ENCODE measurements at regions of chr6 and their contacts with region 1.

Region 1: GRCh38 chr6:161228921-161229591 is 44.8 kb downstream of the AGPAT4 start:
- H3K4me3 Mint-ChIP-seq: peak overlapping the region; percentile 39
- H3K27ac Mint-ChIP-seq: peak overlapping the region; percentile 91
- H3K4me1 Mint-ChIP-seq: peaks cover 59% of the 10 kb centered on the region
- H3K27me3 Mint-ChIP-seq: no peaks in the 10 kb centered on the region

Region 2: GRCh38 chr6:161101517-161101916 is 127.5 kb before region 1 on chr6:
- intact Hi-C with region 1: loop called (anchors 5 kb)
- H3K4me3 Mint-ChIP-seq: no peak overlapping the region
- H3K27ac Mint-ChIP-seq: no peak overlapping the region
- H3K4me1 Mint-ChIP-seq: peaks cover 21% of the 10 kb centered on the region
- H3K27me3 Mint-ChIP-seq: no peaks in the 10 kb centered on the region

Region 3: GRCh38 chr6:161273752-161274487 is 44.9 kb after region 1 on chr6 and contains the start of gene AGPAT4:
- intact Hi-C with region 1: loop called (anchors 5 kb)
- H3K4me3 Mint-ChIP-seq: peak within 1 kb of the TSS; percentile 77
- H3K27ac Mint-ChIP-seq: peak within 1 kb of the TSS; percentile 90
- H3K4me1 Mint-ChIP-seq: peaks cover 36% of the 10 kb centered on the region
- H3K27me3 Mint-ChIP-seq: peaks cover 8% of the 10 kb centered on the region